RWPE1 (cell line): ENCODE measurements at regions of chr3 and their contacts with region 1.

Region 1: DNA sequence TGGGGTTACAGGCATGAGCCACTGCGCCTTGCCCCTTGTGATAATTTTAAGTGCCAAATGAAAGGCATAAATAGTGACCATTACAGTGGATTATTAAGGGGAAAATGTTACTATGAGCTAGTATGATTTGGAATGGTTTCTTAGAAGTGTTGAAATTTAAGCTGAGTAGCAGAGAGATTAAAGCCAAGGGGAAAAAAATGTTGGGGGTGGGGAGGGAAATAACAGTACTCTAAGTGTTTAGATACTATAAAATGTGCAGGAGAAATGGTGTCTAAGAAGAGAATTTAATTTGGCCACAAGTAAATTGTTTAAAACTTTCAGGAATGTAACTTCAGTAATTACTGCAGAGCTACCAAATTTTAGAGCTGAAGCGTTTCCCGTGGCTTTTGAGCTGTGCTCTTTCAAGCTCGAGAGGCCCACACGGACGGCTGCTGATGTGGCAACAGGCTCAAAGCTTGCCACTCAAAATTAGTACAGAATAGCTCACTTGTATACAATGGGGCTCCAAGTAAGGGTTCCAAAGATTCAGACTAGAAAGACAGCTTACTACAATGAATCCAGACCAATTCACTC is 23.9 kb upstream of the SLC12A8 start:
- DNase-seq: no peak
- H3K27ac ChIP-seq: no peak overlapping the region
- CTCF ChIP-seq: no peak

Region 2: GRCh38 chr3:125087768-125088391 is 148.5 kb before region 1 on chr3:
- CTCF ChIA-PET with region 1: no interaction called
- POLR2A ChIA-PET with region 1: no interaction called
- DNase-seq: no peak
- H3K27ac ChIP-seq: no peak overlapping the region
- CTCF ChIP-seq: no peak

Region 3: DNA sequence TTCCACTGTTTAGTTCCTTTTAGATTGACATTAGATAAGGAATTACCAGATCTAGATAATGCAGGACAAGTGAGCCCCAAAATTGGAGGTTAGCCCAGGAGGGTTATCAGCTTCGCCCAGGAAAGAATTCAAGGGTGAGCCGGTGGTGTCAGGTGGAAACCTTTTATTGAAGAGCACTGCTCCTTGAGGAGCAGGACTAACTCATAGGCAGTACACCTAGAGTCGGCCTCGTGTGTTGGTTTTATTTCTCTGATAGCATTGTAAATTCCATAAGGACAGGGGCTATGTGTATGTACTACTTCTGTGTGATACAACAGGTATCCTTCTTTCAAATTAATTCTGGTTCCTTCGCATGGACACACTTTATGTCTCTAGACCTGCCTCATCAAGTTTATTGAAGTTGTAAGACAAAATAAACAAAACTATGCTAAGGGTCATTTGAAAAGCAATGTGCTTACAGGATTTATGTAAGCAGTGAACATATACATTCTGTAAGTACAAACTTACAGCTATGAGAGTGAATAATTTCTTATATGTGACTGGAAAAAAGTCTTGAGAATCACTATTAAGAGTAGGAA is 226.4 kb after region 1 on chr3:
- CTCF ChIA-PET with region 1: no interaction called
- POLR2A ChIA-PET with region 1: interaction called, 12 read pairs
- DNase-seq: no peak
- H3K27ac ChIP-seq: no peak overlapping the region
- CTCF ChIP-seq: no peak